ENCODE measurements at regions of chr14 and their contacts with region 1.

Region 1: GRCh38 chr14:22319526-22320361 is 269.3 kb downstream of the DAD1 start:
- DNase-seq: peak; percentile 65 to 69
- H3K4me3 ChIP-seq: no peak overlapping the region
- H3K4me1 ChIP-seq: no peaks in the 10 kb centered on the region
- H3K27me3 ChIP-seq: peaks cover 27% of the 10 kb centered on the region

Region 2: GRCh38 chr14:22472935-22473854 is 153.5 kb after region 1 on chr14:
- in situ Hi-C with region 1: loop called (anchors 5 kb)
- DNase-seq: peak; percentile 65
- H3K4me3 ChIP-seq: no peak overlapping the region
- H3K4me1 ChIP-seq: peaks cover 23% of the 10 kb centered on the region
- H3K27me3 ChIP-seq: no peaks in the 10 kb centered on the region

Measured in HAP-1 (cell line).